B cell (primary cell): ENCODE measurements at regions of chrX and their contacts with region 1.

Region 1: GRCh38 chrX:71068049-71068763 is at the start of gene SNX12:
- DNase-seq: peak; percentile 93
- ATAC-seq: peak; percentile 93
- H3K4me3 ChIP-seq: peak within 1 kb of the TSS; percentile 74 to 79 (median 76)
- H3K4me3 Mint-ChIP-seq: peak within 1 kb of the TSS; percentile 96
- H3K27ac ChIP-seq: peak within 1 kb of the TSS; percentile 74 to 85
- H3K27ac Mint-ChIP-seq: peak within 1 kb of the TSS; percentile 96
- H3K4me1 ChIP-seq: peaks cover 0 to 12% of the 10 kb centered on the region in 2 donors
- H3K4me1 Mint-ChIP-seq: peaks cover 17% of the 10 kb centered on the region
- H3K27me3 ChIP-seq: no peaks in the 10 kb centered on the region
- H3K27me3 Mint-ChIP-seq: no peaks in the 10 kb centered on the region
- CTCF ChIP-seq: no peak
- total RNA-seq, gene SNX12: 32.6 and 42.9 TPM in 2 replicates

Region 2: GRCh38 chrX:71111141-71111843 is 43.1 kb after region 1 on chrX and contains the start of gene IL2RG:
- CTCF ChIA-PET with region 1: no interaction called
- POLR2A ChIA-PET with region 1: interaction called, 4 read pairs
- intact Hi-C with region 1: loop called (anchors 1 kb)
- DNase-seq: peak; percentile 90
- ATAC-seq: peak; percentile 93
- H3K4me3 ChIP-seq: peak within 1 kb of the TSS; percentile 75 to 90 (median 82)
- H3K4me3 Mint-ChIP-seq: peak within 1 kb of the TSS; percentile 98
- H3K27ac ChIP-seq: peak within 1 kb of the TSS; percentile 98
- H3K27ac Mint-ChIP-seq: peak within 1 kb of the TSS; percentile 99
- H3K4me1 ChIP-seq: peaks cover 53 to 65% of the 10 kb centered on the region in 2 donors
- H3K4me1 Mint-ChIP-seq: peaks cover 63% of the 10 kb centered on the region
- H3K27me3 ChIP-seq: no peaks in the 10 kb centered on the region
- H3K27me3 Mint-ChIP-seq: no peaks in the 10 kb centered on the region
- CTCF ChIP-seq: no peak
- total RNA-seq, gene IL2RG: 276 and 297 TPM in 2 replicates